ENCODE measurements at regions of chr15 and their contacts with region 1.

Region 1: DNA sequence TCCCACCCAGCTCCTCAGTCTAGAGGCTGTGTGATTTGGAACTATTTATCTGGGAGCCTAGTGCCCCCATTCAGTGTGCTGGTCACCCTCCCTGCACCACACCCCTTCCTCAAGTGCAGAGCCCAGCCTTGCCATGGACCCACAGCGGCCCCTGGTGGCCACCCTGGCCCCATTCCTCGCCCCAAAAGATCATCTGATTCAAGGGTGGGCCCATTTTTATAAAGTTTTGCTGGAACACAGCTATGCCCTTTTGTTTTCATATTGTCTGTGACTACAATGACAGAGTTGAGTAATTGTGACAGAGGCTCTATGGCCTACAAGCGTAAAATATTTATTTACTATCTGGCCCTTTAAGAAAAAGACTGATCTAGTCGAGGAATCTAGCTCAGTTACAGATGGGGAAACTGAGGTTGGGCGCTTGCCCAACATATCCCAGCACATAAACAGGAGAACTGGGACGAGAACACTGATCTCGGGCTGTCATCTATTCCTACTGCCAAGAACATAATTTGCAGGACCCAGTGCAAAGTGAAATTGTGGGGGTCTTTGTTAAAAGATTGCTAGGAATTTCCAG is 1.8 kb downstream of the FES start:
- DNase-seq: peak; percentile 78
- ATAC-seq: peak; percentile 69
- H3K4me3 Mint-ChIP-seq: peak overlapping the region; percentile 71
- H3K27ac Mint-ChIP-seq: peak overlapping the region; percentile 76
- H3K4me1 Mint-ChIP-seq: peaks cover 34% of the 10 kb centered on the region
- H3K27me3 Mint-ChIP-seq: no peaks in the 10 kb centered on the region
- CTCF ChIP-seq: peak; percentile 90

Region 2: DNA sequence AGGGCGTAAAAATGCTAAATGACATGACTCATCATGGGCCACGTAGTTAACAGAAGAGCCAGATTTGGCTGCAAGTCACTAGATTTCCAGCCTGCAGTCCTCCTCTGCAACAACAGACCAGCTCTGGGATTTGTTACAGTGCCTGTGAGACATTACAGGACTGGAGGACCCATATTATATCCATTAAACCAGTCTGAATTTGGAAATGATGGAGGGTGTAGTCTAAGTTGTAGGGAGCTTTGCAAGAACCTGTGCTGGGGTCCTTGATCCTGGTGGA is 523.3 kb before region 1 on chr15:
- CTCF ChIA-PET with region 1: interaction called, 4 read pairs
- POLR2A ChIA-PET with region 1: no interaction called
- intact Hi-C with region 1: loop called (anchors 2 kb)
- DNase-seq: no peak
- ATAC-seq: no peak
- H3K4me3 Mint-ChIP-seq: no peak overlapping the region
- H3K27ac Mint-ChIP-seq: no peak overlapping the region
- H3K4me1 Mint-ChIP-seq: peaks cover 8% of the 10 kb centered on the region
- H3K27me3 Mint-ChIP-seq: no peaks in the 10 kb centered on the region
- CTCF ChIP-seq: no peak

Region 3: GRCh38 chr15:90642464-90643300 is 243.4 kb before region 1 on chr15:
- CTCF ChIA-PET with region 1: interaction called, 121 read pairs
- POLR2A ChIA-PET with region 1: interaction called, 14 read pairs
- intact Hi-C with region 1: no loop called
- DNase-seq: no peak
- ATAC-seq: peak; percentile 37
- H3K4me3 Mint-ChIP-seq: no peak overlapping the region
- H3K27ac Mint-ChIP-seq: no peak overlapping the region
- H3K4me1 Mint-ChIP-seq: no peaks in the 10 kb centered on the region
- H3K27me3 Mint-ChIP-seq: no peaks in the 10 kb centered on the region
- CTCF ChIP-seq: no peak

Region 4: DNA sequence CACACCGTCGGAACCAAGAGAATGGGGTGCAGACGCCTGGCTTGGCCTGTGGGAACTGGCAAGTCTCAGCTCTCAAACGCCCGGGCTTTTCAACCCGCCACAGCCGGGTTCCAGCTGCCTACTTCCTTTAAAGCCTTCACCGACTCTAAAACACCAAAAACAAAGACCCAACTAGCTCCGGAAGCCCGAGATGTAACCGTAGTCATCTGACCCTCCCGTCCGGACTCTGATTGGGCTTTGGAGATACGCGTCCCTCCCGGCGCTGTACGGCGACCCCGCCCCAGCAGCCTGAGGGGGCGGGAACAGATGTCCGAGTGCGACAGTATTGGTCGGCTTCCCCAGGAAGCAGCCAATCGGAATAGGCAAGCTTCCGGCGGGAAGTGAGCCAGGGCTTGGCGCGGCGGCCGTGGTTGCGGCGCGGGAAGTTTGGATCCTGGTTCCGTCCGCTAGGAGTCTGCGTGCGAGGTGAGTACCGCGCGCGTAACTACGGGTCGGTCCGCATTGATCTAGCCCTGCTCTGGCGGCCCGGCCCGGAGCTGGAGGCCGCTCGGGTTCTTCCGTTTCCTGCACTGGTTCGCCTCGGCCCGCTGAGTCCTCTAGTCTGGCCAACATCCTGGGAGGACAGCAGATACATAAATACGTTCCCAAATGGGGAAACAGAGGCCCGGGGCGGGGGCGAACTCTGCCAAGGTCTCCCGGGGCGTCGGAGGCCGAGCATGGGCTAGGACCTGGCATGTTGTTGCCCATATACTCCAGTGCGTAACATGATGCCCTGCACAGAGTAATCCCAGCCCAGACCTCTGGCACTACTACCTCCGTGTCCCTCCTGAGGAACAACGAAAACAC is 168.9 kb before region 1 on chr15 and contains the start of gene BLM:
- CTCF ChIA-PET with region 1: interaction called, 14 read pairs
- POLR2A ChIA-PET with region 1: interaction called, 14 read pairs
- intact Hi-C with region 1: loop called (anchors 1 kb)
- DNase-seq: peak; percentile 87
- ATAC-seq: peak; percentile 99
- H3K4me3 Mint-ChIP-seq: peak within 1 kb of the TSS; percentile 96
- H3K27ac Mint-ChIP-seq: peak within 1 kb of the TSS; percentile 94
- H3K4me1 Mint-ChIP-seq: peaks cover 30% of the 10 kb centered on the region
- H3K27me3 Mint-ChIP-seq: no peaks in the 10 kb centered on the region
- CTCF ChIP-seq: no peak
- total RNA-seq, gene BLM: 18.2 and 23.4 TPM in 2 replicates

Region 5: GRCh38 chr15:90818251-90819210 is 67.6 kb before region 1 on chr15:
- CTCF ChIA-PET with region 1: interaction called, 42 read pairs
- POLR2A ChIA-PET with region 1: interaction called, 5 read pairs
- intact Hi-C with region 1: loop called (anchors 1 kb)
- DNase-seq: peak; percentile 60
- ATAC-seq: peak; percentile 95
- H3K4me3 Mint-ChIP-seq: peak overlapping the region; percentile 41
- H3K27ac Mint-ChIP-seq: peak overlapping the region; percentile 66
- H3K4me1 Mint-ChIP-seq: peaks cover 46% of the 10 kb centered on the region
- H3K27me3 Mint-ChIP-seq: no peaks in the 10 kb centered on the region
- CTCF ChIP-seq: no peak

Region 6: DNA sequence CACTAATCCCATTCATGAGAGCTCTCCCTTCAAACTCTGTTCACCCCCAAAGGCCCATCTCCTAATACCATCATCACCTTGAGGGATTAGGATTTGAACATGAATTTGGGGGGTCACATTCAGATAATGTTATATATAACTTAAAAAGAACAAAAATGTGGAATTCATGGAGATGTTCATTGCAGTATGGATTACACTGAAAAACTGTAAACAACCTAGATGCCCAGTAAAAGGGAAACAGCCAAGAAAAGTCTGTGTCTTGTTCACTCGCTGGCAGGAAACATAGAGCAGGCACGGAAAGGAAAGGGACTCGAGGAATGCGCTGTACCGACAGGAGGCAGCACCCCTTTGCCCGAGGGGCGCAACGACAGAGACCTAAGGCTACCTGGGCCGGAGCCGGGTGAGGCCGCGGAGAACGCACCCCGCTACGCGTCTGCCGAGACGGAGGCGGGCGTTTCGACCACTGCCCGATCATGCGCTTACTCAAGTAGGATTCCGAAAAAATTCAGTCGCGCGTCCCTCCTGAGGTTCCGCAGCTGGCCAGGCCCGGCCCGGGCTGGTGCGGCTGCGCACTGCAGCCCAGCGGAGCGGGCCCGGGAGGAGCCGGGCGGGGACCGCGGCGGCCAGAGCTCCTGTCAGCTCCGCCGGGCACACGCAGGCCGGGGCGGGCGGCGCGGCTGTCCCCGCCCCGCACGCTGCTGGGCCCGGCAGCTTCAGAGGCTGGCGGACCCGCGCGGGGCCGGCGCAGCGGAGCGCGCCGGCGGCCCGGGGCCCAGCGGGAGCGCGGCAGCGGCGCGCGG is 16.1 kb after region 1 on chr15:
- CTCF ChIA-PET with region 1: interaction called, 28 read pairs
- POLR2A ChIA-PET with region 1: interaction called, 18 read pairs
- intact Hi-C with region 1: no loop called
- DNase-seq: peak; percentile 75
- ATAC-seq: peak; percentile 71
- H3K4me3 Mint-ChIP-seq: peak overlapping the region; percentile 87
- H3K27ac Mint-ChIP-seq: peak overlapping the region; percentile 86
- H3K4me1 Mint-ChIP-seq: peaks cover 34% of the 10 kb centered on the region
- H3K27me3 Mint-ChIP-seq: no peaks in the 10 kb centered on the region
- CTCF ChIP-seq: no peak